ENCODE measurements at regions of chr1 and their contacts with region 1.

Region 1: GRCh38 chr1:40315239-40315794 is 1.8 kb downstream of the COL9A2 start:
- DNase-seq: peak; percentile 70 to 90 (median 86)
- ATAC-seq: peak; percentile 94
- H3K4me3 ChIP-seq: peak overlapping the region; percentile 73
- H3K4me3 Mint-ChIP-seq: peak overlapping the region; percentile 84 to 95 (median 88)
- H3K27ac ChIP-seq: peak overlapping the region; percentile 46
- H3K27ac Mint-ChIP-seq: peak overlapping the region; percentile 43 to 84 (median 76)
- H3K4me1 ChIP-seq: peaks cover 8% of the 10 kb centered on the region in 2 donors
- H3K4me1 Mint-ChIP-seq: peaks cover 11 to 66% (median 34%) of the 10 kb centered on the region in 7 donors
- H3K27me3 ChIP-seq: no peaks in the 10 kb centered on the region
- H3K27me3 Mint-ChIP-seq: peaks cover 7 to 36% (median 13%) of the 10 kb centered on the region in 5 donors

Region 2: DNA sequence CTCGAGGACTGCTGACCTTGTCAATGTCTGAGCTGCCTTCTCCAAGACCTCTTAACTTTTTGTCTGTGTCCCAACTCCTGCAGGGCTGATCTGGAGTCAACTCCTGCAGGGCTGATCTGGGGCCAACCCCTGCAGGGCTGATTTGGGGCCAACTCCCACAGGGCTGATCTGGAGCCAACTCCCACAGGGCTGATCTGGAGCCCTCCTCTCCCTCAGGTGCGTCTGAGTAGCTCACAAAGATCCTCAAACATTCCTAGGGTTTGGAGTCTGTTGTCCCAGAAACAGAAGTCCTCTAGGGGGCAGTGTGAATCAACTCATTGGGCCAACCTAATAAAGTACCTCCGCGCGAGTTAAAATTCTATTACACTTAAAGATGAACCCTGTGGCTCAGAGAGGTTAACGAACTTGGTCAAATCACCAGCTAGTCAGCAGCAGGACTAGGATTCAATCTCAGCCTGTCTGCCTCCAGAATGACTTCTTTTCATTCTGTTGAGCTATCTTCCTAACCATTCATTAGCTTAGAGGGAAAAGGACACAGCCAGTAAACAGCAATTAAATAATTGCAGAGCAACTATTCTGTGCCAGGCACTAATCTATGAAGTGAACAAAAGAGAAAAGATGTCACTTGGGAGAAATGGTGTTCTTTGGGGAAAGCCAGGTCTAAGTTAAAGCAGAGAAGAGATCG is 171.3 kb before region 1 on chr1:
- CTCF ChIA-PET with region 1: interaction called, 5 read pairs
- POLR2A ChIA-PET with region 1: no interaction called
- intact Hi-C with region 1: loop called in 1 of 2 experiments (anchors 1 kb)
- DNase-seq: peak; percentile 19 to 72 (median 57)
- ATAC-seq: peak; percentile 84
- H3K4me3 ChIP-seq: no peak overlapping the region
- H3K4me3 Mint-ChIP-seq: no peak overlapping the region
- H3K27ac ChIP-seq: no peak overlapping the region
- H3K27ac Mint-ChIP-seq: peak overlapping the region in 1 of 9 donors; percentile 5
- H3K4me1 ChIP-seq: no peaks in the 10 kb centered on the region
- H3K4me1 Mint-ChIP-seq: peaks cover 0 to 12% (median 0%) of the 10 kb centered on the region in 7 donors
- H3K27me3 ChIP-seq: no peaks in the 10 kb centered on the region
- H3K27me3 Mint-ChIP-seq: peaks cover 5 to 61% (median 17%) of the 10 kb centered on the region in 5 donors

Region 3: DNA sequence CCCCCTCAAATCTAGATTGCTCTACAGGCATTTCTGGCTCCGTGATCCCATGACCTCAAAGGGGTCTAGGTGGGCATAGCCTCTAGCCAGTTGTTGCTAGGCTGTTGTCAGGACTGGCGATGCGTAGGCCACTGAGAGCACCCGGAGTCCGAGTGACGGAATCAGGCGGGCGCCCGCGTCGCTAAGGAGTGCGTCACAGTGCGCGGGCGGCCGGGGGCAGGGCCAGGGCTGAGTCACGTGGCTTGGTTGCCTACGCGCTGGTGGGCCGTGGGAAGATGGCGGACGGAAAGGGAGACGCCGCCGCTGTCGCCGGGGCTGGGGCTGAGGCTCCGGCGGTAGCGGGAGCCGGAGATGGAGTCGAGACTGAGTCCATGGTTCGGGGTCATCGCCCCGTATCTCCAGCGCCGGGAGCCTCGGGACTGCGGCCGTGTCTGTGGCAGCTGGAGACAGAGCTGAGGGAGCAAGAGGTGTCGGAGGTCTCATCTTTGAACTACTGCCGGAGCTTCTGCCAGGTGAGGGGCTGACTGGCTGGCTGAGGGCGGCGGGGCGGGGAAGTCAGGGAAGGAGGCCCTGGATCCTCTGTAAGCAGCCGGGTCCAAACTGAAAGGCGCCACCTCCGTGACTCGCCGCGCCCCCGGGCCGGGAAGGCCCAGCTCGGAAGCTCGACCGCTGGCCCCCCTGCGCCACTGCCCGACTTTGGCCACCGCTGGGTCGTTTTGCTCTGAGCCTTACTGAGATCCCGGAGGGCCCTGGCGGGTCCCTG is 154.0 kb before region 1 on chr1 and contains the start of gene RLF:
- CTCF ChIA-PET with region 1: no interaction called
- POLR2A ChIA-PET with region 1: interaction called, 5 read pairs
- intact Hi-C with region 1: loop called in 1 of 2 experiments (anchors 1 kb)
- DNase-seq: peak; percentile 91 to 97 (median 95)
- ATAC-seq: peak; percentile 99
- H3K4me3 ChIP-seq: peak within 1 kb of the TSS; percentile 76
- H3K4me3 Mint-ChIP-seq: no peak within 1 kb of the TSS
- H3K27ac ChIP-seq: peak within 1 kb of the TSS; percentile 88
- H3K27ac Mint-ChIP-seq: peak within 1 kb of the TSS in 2 of 9 donors; percentile 99 to 100
- H3K4me1 ChIP-seq: peaks cover 22 to 25% of the 10 kb centered on the region in 2 donors
- H3K4me1 Mint-ChIP-seq: peaks cover 5 to 19% (median 7%) of the 10 kb centered on the region in 7 donors
- H3K27me3 ChIP-seq: no peaks in the 10 kb centered on the region
- H3K27me3 Mint-ChIP-seq: no peaks in the 10 kb centered on the region
- total RNA-seq, gene RLF: 20.9 to 28.6 (median 24.7) TPM

Region 4: GRCh38 chr1:40299366-40300248 is 15.7 kb before region 1 on chr1:
- CTCF ChIA-PET with region 1: no interaction called
- POLR2A ChIA-PET with region 1: no interaction called
- intact Hi-C with region 1: no loop called
- DNase-seq: no peak
- ATAC-seq: no peak
- H3K4me3 ChIP-seq: no peak overlapping the region
- H3K4me3 Mint-ChIP-seq: no peak overlapping the region
- H3K27ac ChIP-seq: no peak overlapping the region
- H3K27ac Mint-ChIP-seq: peak overlapping the region in 1 of 9 donors; percentile 57
- H3K4me1 ChIP-seq: no peaks in the 10 kb centered on the region
- H3K4me1 Mint-ChIP-seq: peaks cover 0 to 10% (median 0%) of the 10 kb centered on the region in 7 donors
- H3K27me3 ChIP-seq: no peaks in the 10 kb centered on the region
- H3K27me3 Mint-ChIP-seq: no peaks in the 10 kb centered on the region

Region 5: DNA sequence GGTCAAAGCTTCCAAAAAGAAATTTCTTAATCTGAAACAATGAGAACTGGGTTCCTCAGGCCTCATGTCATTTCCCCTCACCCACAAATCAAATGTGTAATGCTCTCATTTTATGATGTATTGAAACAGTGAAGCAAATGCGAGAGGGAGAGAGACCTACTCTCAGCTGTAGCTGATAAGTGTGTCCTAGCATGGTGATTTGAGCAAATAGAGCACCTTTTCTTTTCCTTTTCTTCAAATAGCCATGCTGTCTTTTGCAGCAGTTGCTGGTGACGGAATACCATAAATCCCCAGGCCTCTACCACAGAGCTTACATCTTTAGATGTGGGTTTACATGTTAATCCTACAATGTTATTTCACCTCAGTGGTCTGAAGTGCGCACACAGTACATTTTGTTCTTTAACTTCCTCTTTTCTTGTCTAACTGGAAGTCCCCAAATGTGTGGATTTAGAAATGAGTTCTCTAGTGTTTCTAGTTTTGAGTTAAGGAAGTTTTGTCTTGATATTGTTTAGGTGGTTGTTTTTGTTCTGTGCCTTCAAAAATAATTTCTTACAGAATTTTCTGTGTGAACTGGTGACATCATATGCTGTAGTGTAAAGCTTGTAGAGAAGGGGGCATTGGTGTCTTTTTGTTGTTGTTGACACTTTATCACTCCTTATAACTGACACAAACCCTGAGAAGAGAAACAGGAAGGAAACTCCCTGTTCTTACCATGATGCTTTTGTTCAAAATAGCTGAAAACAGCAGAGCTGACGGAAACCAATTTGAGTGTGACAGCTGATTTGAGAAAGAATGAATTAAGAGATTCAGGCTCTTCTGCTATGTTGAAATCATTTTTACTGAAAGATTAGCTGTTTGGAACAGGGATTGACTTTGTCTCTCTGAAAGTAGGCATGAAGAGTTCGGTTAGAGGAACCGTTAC is 70.4 kb after region 1 on chr1:
- CTCF ChIA-PET with region 1: interaction called, 3 read pairs
- POLR2A ChIA-PET with region 1: interaction called, 5 read pairs
- intact Hi-C with region 1: loop called in 1 of 2 experiments (anchors 5 kb)
- DNase-seq: peak in 8 of 9 donors; percentile 55 to 97 (median 94)
- ATAC-seq: peak; percentile 86
- H3K4me3 ChIP-seq: peak overlapping the region; percentile 48
- H3K4me3 Mint-ChIP-seq: peak overlapping the region; percentile 79 to 99 (median 87)
- H3K27ac ChIP-seq: peak overlapping the region; percentile 99
- H3K27ac Mint-ChIP-seq: peak overlapping the region; percentile 97 to 99 (median 98)
- H3K4me1 ChIP-seq: peaks cover 82 to 84% of the 10 kb centered on the region in 2 donors
- H3K4me1 Mint-ChIP-seq: peaks cover 71 to 94% (median 90%) of the 10 kb centered on the region in 7 donors
- H3K27me3 ChIP-seq: no peaks in the 10 kb centered on the region
- H3K27me3 Mint-ChIP-seq: no peaks in the 10 kb centered on the region

Measured in naive thymus-derived CD4-positive, alpha-beta T cell (primary cell).